ENCODE measurements at regions of chr17 and their contacts with region 1.

Region 1: GRCh38 chr17:6913608-6914443 is 82.0 kb upstream of the ALOX12 start:
- DNase-seq: peak; percentile 86
- H3K4me3 Mint-ChIP-seq: peak overlapping the region; percentile 53
- H3K27ac Mint-ChIP-seq: no peak overlapping the region
- H3K4me1 Mint-ChIP-seq: peaks cover 28% of the 10 kb centered on the region
- H3K27me3 Mint-ChIP-seq: peaks cover 40% of the 10 kb centered on the region

Region 2: GRCh38 chr17:6843241-6843880 is 70.5 kb before region 1 on chr17:
- CTCF ChIA-PET with region 1: interaction called, 11 read pairs
- DNase-seq: no peak
- H3K4me3 Mint-ChIP-seq: no peak overlapping the region
- H3K27ac Mint-ChIP-seq: no peak overlapping the region
- H3K4me1 Mint-ChIP-seq: peaks cover 5% of the 10 kb centered on the region
- H3K27me3 Mint-ChIP-seq: peaks cover 46% of the 10 kb centered on the region

Region 3: GRCh38 chr17:6959700-6960099 is 45.9 kb after region 1 on chr17:
- CTCF ChIA-PET with region 1: no interaction called
- DNase-seq: no peak
- H3K4me3 Mint-ChIP-seq: no peak overlapping the region
- H3K27ac Mint-ChIP-seq: no peak overlapping the region
- H3K4me1 Mint-ChIP-seq: no peaks in the 10 kb centered on the region
- H3K27me3 Mint-ChIP-seq: peaks cover 4% of the 10 kb centered on the region

Region 4: DNA sequence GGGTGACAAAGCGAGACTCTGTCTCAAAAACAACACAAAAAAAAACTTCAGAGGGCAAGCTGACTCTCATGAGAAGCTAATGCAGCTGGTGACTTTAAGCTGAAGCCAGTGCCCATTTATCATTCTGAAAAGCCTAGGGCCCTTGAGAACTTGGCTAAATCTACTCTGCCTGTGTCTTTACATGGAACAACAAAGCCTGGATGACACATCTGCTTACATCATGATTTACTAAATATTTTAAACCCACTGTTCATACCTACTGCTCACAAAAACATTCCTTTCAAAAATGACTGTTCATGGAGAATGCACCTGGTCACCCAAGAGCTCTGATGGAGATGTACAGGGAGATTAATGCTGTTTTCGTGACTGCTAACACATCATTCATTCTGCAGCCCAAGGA is 76.0 kb after region 1 on chr17:
- CTCF ChIA-PET with region 1: interaction called, 12 read pairs
- DNase-seq: no peak
- H3K4me3 Mint-ChIP-seq: no peak overlapping the region
- H3K27ac Mint-ChIP-seq: no peak overlapping the region
- H3K4me1 Mint-ChIP-seq: no peaks in the 10 kb centered on the region
- H3K27me3 Mint-ChIP-seq: no peaks in the 10 kb centered on the region

Region 5: DNA sequence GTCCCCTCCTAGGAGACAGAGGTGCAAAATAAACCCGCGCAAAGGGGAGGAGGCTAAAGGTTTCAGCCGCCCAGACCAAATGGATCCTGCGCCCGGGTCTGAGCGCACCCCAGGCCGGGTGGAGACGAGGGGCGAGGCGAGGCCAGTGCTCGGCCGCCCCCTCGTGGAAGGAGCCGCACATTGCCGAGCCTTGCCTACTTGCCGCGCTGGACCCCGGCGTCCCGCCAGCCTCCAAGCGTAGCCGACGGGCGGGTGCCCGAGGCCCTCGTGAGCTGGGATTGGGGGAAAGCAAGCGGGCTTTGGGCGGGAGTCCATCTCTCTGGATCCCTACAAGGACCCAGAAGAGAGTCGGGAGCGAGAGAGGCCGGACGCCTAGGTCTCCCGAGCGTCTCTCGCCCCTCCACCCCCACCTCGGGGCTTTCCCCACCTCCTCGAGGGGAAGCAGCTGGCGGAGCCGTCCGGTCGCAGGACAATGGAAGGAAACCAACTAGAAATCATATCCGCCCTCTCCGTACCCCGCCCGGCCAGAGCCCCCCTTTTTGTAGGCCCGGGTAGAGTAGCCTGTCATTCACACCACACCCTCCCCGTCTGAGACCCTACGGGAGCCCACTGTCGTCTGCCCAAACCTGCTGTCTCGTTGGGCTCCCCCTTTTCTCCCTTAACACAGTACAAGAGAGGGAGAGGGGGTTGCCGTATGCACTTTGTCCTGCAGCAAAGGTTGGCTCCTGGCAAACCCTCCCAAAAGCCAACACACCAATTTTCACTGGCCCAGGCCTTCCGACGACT is 108.4 kb after region 1 on chr17:
- CTCF ChIA-PET with region 1: interaction called, 51 read pairs
- DNase-seq: peak; percentile 83
- H3K4me3 Mint-ChIP-seq: peak overlapping the region; percentile 26
- H3K27ac Mint-ChIP-seq: no peak overlapping the region
- H3K4me1 Mint-ChIP-seq: peaks cover 69% of the 10 kb centered on the region
- H3K27me3 Mint-ChIP-seq: peaks cover 50% of the 10 kb centered on the region